IMR-90 (cell line): ENCODE measurements at regions of chrX and their contacts with region 1.

Region 1: DNA sequence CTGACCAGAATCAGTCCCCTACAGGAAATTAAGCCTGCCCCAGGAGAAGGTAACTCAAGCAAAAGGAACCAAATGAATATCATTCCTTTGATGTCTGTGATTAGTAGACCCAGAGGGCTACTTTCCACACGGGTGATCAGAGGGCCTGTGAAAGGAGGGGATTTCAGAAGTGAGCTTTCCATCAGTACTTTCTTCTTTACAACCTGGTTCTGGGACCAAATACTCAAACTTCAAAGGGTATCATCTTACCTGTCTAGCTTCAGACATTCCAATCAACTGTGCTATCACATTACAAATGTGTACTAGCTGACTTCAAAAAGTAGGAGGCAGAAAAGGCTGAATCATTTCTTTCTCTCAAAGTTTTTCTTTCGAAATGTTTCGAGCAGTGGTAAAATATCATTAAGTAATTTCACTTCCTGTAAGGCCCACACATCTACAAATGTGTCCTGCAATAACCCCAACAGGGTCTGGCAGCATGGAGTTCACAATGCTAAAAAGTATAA is 23.9 kb downstream of the ACSL4 start:
- DNase-seq: peak; percentile 65
- ATAC-seq: peak; percentile 55
- H3K4me3 ChIP-seq: no peak overlapping the region
- H3K27ac ChIP-seq: peak overlapping the region; percentile 48; the same call in 1 of the 2 replicates
- H3K4me1 ChIP-seq: peaks cover 4% of the 10 kb centered on the region
- H3K27me3 ChIP-seq: no peaks in the 10 kb centered on the region; the same call in 1 of the 2 replicates
- CTCF ChIP-seq: peak; percentile 11; the same call in 1 of the 2 replicates
- POLR2A ChIP-seq: no peak
- RAD21 ChIP-seq: no peak

Region 2: GRCh38 chrX:109872021-109872732 is 163.0 kb after region 1 on chrX:
- CTCF ChIA-PET with region 1: interaction called, 10 read pairs
- POLR2A ChIA-PET with region 1: no interaction called
- dilution Hi-C with region 1: no loop called
- in situ Hi-C with region 1: no loop called
- intact Hi-C with region 1: no loop called
- DNase-seq: peak; percentile 83
- ATAC-seq: peak; percentile 74
- H3K4me3 ChIP-seq: no peak overlapping the region
- H3K27ac ChIP-seq: peak overlapping the region; percentile 7
- H3K4me1 ChIP-seq: peaks cover 3% of the 10 kb centered on the region; the same call in 1 of the 2 replicates
- H3K27me3 ChIP-seq: no peaks in the 10 kb centered on the region
- CTCF ChIP-seq: no peak
- POLR2A ChIP-seq: no peak
- RAD21 ChIP-seq: no peak

Region 3: DNA sequence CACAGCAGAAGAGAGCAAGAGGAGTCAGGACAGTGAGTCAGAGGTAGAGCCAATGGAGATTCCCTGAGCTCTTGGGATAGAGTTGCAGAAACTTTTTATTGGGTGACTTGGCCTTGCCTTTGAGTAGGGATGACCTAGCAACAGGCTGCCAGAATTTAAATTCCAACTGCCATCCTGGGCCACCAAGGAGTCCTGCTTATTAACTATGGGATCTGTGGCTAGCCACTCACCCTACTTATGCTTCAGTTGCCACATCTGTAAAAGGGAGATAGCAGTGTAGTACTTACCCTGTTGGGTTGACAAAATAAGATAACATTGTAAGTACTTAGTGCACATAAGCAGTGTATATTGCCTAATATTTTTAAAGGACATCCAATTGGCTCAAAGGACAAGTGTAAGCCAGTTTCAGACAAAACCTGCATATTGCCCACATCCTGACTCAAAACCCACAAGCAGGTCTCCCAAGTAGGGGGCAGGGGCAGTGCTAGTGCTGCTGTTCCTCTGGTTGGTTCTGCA is 250.2 kb after region 1 on chrX:
- CTCF ChIA-PET with region 1: no interaction called
- POLR2A ChIA-PET with region 1: no interaction called
- dilution Hi-C with region 1: no loop called
- in situ Hi-C with region 1: no loop called
- intact Hi-C with region 1: no loop called
- DNase-seq: no peak
- ATAC-seq: no peak
- H3K4me3 ChIP-seq: no peak overlapping the region
- H3K27ac ChIP-seq: no peak overlapping the region
- H3K4me1 ChIP-seq: no peaks in the 10 kb centered on the region
- H3K27me3 ChIP-seq: peaks cover 12% of the 10 kb centered on the region
- CTCF ChIP-seq: no peak
- POLR2A ChIP-seq: no peak
- RAD21 ChIP-seq: no peak